OCI-LY7 (cell line): ENCODE measurements at regions of chr4 and their contacts with region 1.

Region 1: GRCh38 chr4:77146186-77147078 is 10.6 kb upstream of the CCNG2 start:
- DNase-seq: peak; percentile 59
- H3K4me3 ChIP-seq: no peak overlapping the region
- H3K27ac ChIP-seq: peak overlapping the region; percentile 38
- H3K4me1 ChIP-seq: peaks cover 52% of the 10 kb centered on the region
- CTCF ChIP-seq: no peak

Region 2: DNA sequence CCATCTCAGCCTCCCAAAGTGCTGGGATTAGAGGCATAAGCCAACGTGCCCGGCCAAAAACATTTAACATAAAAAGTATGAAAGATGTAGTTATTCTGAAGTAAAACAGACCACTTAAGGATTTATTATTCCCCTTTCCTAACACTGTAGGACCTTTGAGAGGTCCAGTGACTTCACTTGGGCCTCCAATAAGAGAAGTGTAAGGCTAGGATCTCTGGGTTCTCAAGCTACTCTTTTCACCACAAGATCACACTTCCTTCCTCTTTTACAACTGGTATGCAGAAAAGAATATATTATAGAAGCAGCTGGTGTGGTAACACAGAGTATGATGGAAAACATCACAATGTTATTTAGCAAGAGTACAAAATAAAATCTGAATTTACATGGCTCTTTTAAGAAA is 19.6 kb before region 1 on chr4:
- CTCF ChIA-PET with region 1: interaction called, 3 read pairs
- POLR2A ChIA-PET with region 1: interaction called, 213 read pairs
- intact Hi-C with region 1: no loop called
- DNase-seq: peak; percentile 87
- H3K4me3 ChIP-seq: peak overlapping the region; percentile 15
- H3K27ac ChIP-seq: peak overlapping the region; percentile 74
- H3K4me1 ChIP-seq: peaks cover 50% of the 10 kb centered on the region
- CTCF ChIP-seq: no peak

Region 3: GRCh38 chr4:77132652-77133312 is 13.7 kb before region 1 on chr4:
- CTCF ChIA-PET with region 1: no interaction called
- POLR2A ChIA-PET with region 1: interaction called, 213 read pairs
- intact Hi-C with region 1: no loop called
- DNase-seq: no peak
- H3K4me3 ChIP-seq: no peak overlapping the region
- H3K27ac ChIP-seq: no peak overlapping the region
- H3K4me1 ChIP-seq: peaks cover 12% of the 10 kb centered on the region
- CTCF ChIP-seq: no peak